ENCODE measurements at regions of chr12 and their contacts with region 1.

Region 1: GRCh38 chr12:93699271-93700145 is 22.3 kb downstream of the CRADD start:
- DNase-seq: peak in 1 of 2 experiments; percentile 50
- H3K4me3 ChIP-seq: no peak overlapping the region
- H3K4me3 Mint-ChIP-seq: peak overlapping the region; percentile 79
- H3K27ac Mint-ChIP-seq: peak overlapping the region; percentile 93
- H3K4me1 ChIP-seq: peaks cover 52% of the 10 kb centered on the region
- H3K4me1 Mint-ChIP-seq: peaks cover 45% of the 10 kb centered on the region
- H3K27me3 ChIP-seq: no peaks in the 10 kb centered on the region
- H3K27me3 Mint-ChIP-seq: no peaks in the 10 kb centered on the region
- CTCF ChIP-seq: no peak

Region 2: DNA sequence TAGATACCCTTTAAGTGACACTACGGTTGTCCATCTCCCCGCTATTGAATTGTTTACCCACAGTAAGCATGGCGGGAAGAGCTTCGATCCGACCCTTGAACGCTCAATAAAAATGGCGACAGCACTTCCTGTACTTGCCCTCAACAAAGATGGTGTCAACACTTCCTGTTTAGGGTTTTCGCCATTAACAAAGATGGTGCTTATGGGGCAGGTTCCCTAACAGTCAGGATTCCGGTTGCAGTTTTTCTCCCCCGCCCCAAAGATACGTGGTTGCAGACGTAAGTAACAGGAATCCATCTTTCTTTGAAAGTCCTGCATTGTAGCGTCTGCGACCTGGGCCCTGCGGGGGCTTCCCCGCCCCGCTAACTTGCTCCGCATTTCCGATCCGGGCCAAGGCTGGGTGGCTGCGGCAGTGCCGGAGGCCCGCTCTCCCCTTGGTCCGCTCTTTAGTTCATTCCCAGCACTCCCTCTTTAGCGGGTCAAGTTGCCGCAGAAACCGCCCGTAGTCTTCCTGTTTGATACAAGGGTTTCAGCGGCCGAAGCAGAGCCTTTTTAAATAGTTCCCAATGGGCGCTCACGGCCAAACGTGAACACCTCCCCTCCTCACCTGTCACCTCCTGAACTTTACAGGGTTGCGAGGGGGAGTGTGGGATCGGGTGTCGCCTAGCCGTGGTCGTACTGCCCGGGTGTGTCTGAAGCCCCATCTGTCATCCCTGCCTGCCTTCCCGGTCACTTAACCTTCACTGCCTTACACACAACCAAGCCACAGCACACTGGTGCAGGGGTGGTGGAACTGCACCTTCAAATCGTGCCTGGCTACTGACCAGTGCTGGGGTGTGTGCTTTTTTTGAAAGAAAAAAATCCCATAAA is 22.1 kb before region 1 on chr12 and contains the start of gene CRADD:
- CTCF ChIA-PET with region 1: no interaction called
- POLR2A ChIA-PET with region 1: interaction called, 7 read pairs
- intact Hi-C with region 1: loop called (anchors 1 kb)
- DNase-seq: peak; percentile 91
- H3K4me3 ChIP-seq: peak within 1 kb of the TSS; percentile 63
- H3K4me3 Mint-ChIP-seq: peak within 1 kb of the TSS; percentile 89
- H3K27ac Mint-ChIP-seq: peak within 1 kb of the TSS; percentile 98
- H3K4me1 ChIP-seq: peaks cover 17% of the 10 kb centered on the region
- H3K4me1 Mint-ChIP-seq: peaks cover 21% of the 10 kb centered on the region
- H3K27me3 ChIP-seq: no peaks in the 10 kb centered on the region
- H3K27me3 Mint-ChIP-seq: no peaks in the 10 kb centered on the region
- CTCF ChIP-seq: no peak
- total RNA-seq, gene CRADD: 29.2 and 30.6 TPM in 2 replicates

Measured in Caco-2 (cell line).